Left cardiac atrium (tissue), 4 donors: ENCODE measurements at regions of chr6 and their contacts with region 1.

Region 1: DNA sequence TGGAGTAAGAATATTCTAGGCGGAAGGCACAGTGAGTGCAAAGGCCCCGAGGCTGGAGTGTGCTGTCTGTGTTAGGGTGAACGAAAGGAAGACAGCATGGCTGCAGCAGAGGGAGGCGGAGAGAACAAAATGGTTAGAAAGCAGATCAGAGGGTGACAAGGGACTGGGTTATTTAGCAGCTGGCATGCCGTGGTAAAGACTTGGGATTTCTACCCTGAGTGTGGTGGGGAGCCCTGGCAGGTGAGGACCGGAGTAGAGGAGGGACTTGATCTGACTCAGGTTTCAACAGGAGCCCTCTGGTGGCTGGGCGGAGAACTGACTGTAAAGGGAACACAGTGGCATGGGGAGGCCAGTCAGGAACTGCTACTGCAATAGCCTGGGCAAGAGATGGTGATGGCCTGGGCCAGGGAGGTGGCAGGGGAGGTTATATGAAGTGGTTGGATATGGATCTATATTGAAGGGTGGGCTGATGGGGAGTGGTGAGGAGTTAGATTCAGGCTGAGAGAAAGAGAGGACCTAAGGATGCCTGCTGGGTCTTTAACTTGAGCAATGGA is 38.0 kb downstream of the PIM1 start:
- DNase-seq: peak; percentile 83
- ATAC-seq: peak; percentile 64 to 75

Region 2: GRCh38 chr6:36885461-36886401 is 322.2 kb before region 1 on chr6 and contains the start of gene C6orf89:
- intact Hi-C with region 1: loop called in 1 of 2 experiments (anchors 10 kb)
- DNase-seq: peak; percentile 99
- ATAC-seq: peak; percentile 100
- total RNA-seq, gene C6orf89: 62.9 to 74.1 TPM

Region 3: DNA sequence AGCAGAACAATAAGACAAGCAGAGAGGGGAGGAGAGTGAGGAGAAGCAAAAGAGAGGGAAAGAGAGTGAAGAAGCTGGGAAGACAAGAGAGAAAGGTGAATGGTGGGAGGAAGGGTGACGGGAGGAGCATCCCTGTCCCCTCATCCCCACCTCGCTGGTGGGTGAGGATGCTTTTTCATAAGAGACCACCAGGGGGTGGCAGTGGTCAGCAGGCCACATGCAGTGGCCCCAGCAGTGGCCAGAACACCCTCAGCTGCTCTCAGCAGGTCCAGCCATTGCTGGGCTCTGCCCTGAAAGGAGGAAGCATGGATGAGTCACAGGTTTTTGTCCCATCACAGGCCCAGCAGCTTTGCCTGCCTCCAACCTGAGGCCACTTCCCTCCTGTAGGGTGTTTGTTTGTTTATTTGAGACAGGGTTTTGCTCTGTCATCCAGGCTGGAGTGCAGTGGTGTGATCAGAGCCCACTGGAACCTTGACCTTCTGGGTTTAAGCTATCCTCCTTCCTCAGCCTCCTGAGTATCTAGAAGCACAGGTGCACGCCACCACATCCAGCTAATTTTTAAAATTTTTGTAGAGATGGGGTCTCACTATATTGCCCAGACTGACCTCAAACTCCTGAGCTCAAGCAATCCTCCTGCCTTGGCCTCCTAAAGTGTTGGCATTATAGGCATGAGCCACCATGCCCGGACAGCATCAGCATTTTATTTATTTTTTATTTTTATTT is 178.6 kb before region 1 on chr6:
- intact Hi-C with region 1: loop called (anchors 2 to 10 kb)
- DNase-seq: peak; percentile 81
- ATAC-seq: peak; percentile 88 to 93

Region 4: DNA sequence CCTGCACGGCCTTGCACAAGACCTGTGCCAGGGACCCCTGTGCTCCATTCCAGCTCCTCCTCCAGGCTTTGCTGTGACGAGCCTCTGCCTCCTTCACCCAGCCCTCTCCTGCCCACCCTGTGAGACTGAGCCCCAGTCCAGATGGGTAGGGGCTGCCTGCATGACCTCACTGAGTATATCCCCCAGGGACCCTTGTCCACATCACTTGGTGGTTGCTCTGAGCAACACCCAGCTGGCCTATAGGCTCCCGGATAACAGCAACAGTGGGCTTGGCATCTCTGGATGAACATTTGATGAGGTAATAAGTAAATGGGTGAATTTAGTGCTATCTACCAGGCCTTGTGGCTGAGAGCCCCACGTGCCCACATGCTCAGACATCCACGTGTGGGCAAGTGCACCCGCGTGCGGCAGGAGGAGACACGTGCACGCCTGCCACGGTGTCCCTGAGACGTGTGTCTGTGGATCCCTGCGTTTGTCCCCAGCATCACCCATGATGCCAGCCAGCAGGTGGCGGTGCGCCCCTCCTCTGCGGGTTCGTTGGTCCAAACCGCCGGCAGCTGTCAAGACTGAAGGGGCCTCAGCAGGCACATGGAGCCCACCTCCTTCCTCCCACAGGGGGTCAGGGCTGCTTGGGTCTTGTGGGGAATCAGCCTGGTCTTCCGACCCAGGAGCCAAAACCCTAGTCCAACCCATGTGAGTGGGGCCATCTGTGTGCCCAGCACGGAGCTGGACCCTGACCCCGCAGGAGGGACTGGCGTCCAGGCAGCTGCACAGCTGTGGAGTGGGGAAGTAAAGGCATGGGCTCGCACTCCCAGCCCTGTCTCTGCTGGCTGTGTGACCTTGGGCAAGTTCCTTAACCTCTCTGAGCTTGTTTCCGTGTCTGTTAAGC is 156.6 kb before region 1 on chr6:
- intact Hi-C with region 1: loop called (anchors 1 to 5 kb)
- DNase-seq: peak; percentile 93
- ATAC-seq: peak; percentile 78 to 85